Endothelial cell of umbilical vein (primary cell): ENCODE measurements at regions of chr1 and their contacts with region 1.

Region 1: GRCh38 chr1:177948336-177948972 is 21.4 kb downstream of the SEC16B start:
- DNase-seq: peak; percentile 75
- H3K4me3 ChIP-seq: no peak overlapping the region
- H3K27ac ChIP-seq: no peak overlapping the region
- H3K4me1 ChIP-seq: no peaks in the 10 kb centered on the region
- H3K27me3 ChIP-seq: no peaks in the 10 kb centered on the region
- CTCF ChIP-seq: peak; percentile 86 to 94
- POLR2A ChIP-seq: no peak

Region 2: GRCh38 chr1:176897350-176898236 is 1050.9 kb before region 1 on chr1:
- CTCF ChIA-PET with region 1: interaction called, 183 read pairs
- POLR2A ChIA-PET with region 1: no interaction called
- dilution Hi-C with region 1: no loop called
- intact Hi-C with region 1: loop called (anchors 1 kb)
- DNase-seq: peak; percentile 49
- H3K4me3 ChIP-seq: peak overlapping the region in 1 of 3 experiments; percentile 37
- H3K27ac ChIP-seq: no peak overlapping the region
- H3K4me1 ChIP-seq: peaks cover 4% of the 10 kb centered on the region
- H3K27me3 ChIP-seq: no peaks in the 10 kb centered on the region
- CTCF ChIP-seq: peak; percentile 79 to 89
- POLR2A ChIP-seq: no peak

Region 3: GRCh38 chr1:177256153-177257075 is 692.0 kb before region 1 on chr1:
- CTCF ChIA-PET with region 1: interaction called, 5 read pairs
- POLR2A ChIA-PET with region 1: no interaction called
- dilution Hi-C with region 1: no loop called
- intact Hi-C with region 1: loop called (anchors 1 kb)
- DNase-seq: peak; percentile 53
- H3K4me3 ChIP-seq: no peak overlapping the region
- H3K27ac ChIP-seq: no peak overlapping the region
- H3K4me1 ChIP-seq: peaks cover 8% of the 10 kb centered on the region
- H3K27me3 ChIP-seq: no peaks in the 10 kb centered on the region
- CTCF ChIP-seq: peak; percentile 42 to 45
- POLR2A ChIP-seq: no peak

Region 4: DNA sequence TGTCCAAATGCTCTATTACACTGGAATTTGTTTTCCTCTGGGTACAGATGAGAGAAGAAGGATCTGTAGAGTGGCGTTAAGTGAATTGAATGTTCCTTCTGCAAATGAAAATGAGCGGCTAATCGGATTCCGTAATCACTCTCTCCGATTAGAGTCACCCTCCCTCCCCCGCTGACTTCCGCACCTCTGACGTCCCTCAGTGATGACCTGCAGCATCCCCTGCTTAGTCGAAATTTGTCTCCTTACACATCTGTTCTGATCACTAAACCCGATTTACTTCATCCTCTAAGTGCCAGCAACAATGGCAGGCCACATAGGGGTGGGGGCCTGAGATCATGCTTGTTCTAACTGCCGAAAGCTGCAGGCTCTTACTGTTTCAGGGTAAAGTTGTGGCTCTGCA is 357.3 kb before region 1 on chr1:
- CTCF ChIA-PET with region 1: no interaction called
- POLR2A ChIA-PET with region 1: no interaction called
- dilution Hi-C with region 1: no loop called
- intact Hi-C with region 1: loop called (anchors 10 kb)
- DNase-seq: no peak
- H3K4me3 ChIP-seq: no peak overlapping the region
- H3K27ac ChIP-seq: no peak overlapping the region
- H3K4me1 ChIP-seq: no peaks in the 10 kb centered on the region
- H3K27me3 ChIP-seq: peaks cover 0 to 2% of the 10 kb centered on the region in 2 experiments
- CTCF ChIP-seq: no peak
- POLR2A ChIP-seq: no peak

Region 5: GRCh38 chr1:177928194-177928593 is 20.3 kb before region 1 on chr1:
- CTCF ChIA-PET with region 1: interaction called, 29 read pairs
- POLR2A ChIA-PET with region 1: no interaction called
- dilution Hi-C with region 1: no loop called
- intact Hi-C with region 1: no loop called
- DNase-seq: peak; percentile 22
- H3K4me3 ChIP-seq: no peak overlapping the region
- H3K27ac ChIP-seq: peak overlapping the region; percentile 100
- H3K4me1 ChIP-seq: peaks cover 38% of the 10 kb centered on the region
- H3K27me3 ChIP-seq: no peaks in the 10 kb centered on the region
- CTCF ChIP-seq: no peak
- POLR2A ChIP-seq: no peak

Region 6: DNA sequence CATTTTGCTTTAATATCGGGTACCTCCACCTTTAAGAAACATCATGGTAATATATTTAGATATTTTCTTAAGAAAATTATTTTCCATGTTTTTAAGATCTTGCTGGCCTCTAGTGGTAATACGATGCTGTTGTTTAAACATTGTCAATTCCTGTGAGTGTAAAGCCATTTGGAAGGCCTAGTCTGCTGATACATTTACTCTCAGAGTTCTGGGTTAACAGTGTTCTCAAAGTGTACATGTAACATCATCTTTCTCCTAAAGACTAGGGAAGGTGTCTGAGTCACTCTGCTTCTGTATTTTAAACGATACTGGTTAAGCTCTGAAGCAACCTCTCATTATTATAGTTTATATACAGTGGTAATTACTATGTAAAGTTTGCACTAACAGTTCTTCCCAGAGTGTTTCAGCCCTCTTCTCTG is 334.5 kb after region 1 on chr1:
- CTCF ChIA-PET with region 1: interaction called, 22 read pairs
- POLR2A ChIA-PET with region 1: no interaction called
- dilution Hi-C with region 1: no loop called
- intact Hi-C with region 1: loop called (anchors 1 kb)
- DNase-seq: peak; percentile 69
- H3K4me3 ChIP-seq: no peak overlapping the region
- H3K27ac ChIP-seq: no peak overlapping the region
- H3K4me1 ChIP-seq: no peaks in the 10 kb centered on the region
- H3K27me3 ChIP-seq: no peaks in the 10 kb centered on the region
- CTCF ChIP-seq: peak; percentile 28 to 34
- POLR2A ChIP-seq: no peak